B cell (primary cell): ENCODE measurements at regions of chr18 and their contacts with region 1.

Region 1: DNA sequence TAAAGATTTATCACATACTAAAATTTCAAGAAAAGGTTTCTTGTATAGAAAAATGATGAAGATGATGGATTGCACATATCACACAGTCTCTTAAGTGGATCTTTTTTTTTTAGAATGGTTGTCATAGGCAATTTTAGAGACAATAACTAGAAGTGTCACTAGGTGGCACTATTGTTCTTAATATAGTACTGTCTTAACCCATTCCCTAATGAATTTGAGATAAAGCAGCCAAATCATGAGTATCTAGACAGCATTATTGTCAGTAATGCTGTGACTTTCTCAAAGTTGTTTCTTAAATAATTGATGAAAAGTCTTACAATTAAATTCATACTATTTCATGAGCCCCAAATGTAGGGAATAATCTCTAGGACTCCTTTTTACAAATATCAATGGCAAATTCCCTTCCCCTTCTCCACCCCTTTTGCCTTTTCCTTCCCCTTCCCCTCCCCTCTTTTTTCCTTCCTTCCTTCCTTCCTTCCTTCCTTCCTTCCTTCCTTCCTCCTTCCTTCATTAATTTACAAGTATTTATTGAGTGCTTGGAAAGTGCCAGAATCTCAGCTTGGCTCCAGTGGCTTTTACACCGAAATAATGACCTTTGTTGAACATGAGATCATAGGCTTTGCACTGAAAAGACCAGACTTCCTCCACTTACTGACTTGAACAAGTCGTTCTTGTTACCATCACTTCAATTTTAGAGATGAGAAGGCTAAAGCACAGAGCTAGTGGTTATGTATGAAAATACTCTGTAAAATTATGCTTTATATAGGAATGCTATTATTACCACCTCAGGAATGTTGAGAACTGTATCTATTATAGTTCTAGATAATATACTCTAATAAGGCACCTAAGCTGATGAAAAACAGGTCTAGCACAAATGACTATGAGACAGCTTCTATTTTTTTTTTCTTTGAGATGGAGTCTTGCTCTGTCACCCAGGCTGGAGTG is 19.8 kb downstream of the MYL12B start:
- DNase-seq: peak; percentile 85
- ATAC-seq: peak; percentile 48
- H3K4me3 ChIP-seq: no peak overlapping the region
- H3K4me3 Mint-ChIP-seq: no peak overlapping the region
- H3K27ac ChIP-seq: no peak overlapping the region
- H3K27ac Mint-ChIP-seq: no peak overlapping the region
- H3K4me1 ChIP-seq: peaks cover 22 to 27% of the 10 kb centered on the region in 2 donors
- H3K4me1 Mint-ChIP-seq: peaks cover 29% of the 10 kb centered on the region
- H3K27me3 ChIP-seq: no peaks in the 10 kb centered on the region
- H3K27me3 Mint-ChIP-seq: no peaks in the 10 kb centered on the region
- CTCF ChIP-seq: peak; percentile 89

Region 2: GRCh38 chr18:3261371-3262246 is 20.1 kb before region 1 on chr18 and contains the start of gene MYL12B:
- CTCF ChIA-PET with region 1: interaction called, 6 read pairs
- POLR2A ChIA-PET with region 1: interaction called, 6 read pairs
- intact Hi-C with region 1: loop called (anchors 1 kb)
- DNase-seq: peak; percentile 93
- ATAC-seq: peak; percentile 80
- H3K4me3 ChIP-seq: peak within 1 kb of the TSS; percentile 75 to 96 (median 86)
- H3K4me3 Mint-ChIP-seq: peak within 1 kb of the TSS; percentile 88
- H3K27ac ChIP-seq: peak within 1 kb of the TSS; percentile 86 to 97
- H3K27ac Mint-ChIP-seq: peak within 1 kb of the TSS; percentile 100
- H3K4me1 ChIP-seq: peaks cover 70 to 73% of the 10 kb centered on the region in 2 donors
- H3K4me1 Mint-ChIP-seq: peaks cover 77% of the 10 kb centered on the region
- H3K27me3 ChIP-seq: no peaks in the 10 kb centered on the region
- H3K27me3 Mint-ChIP-seq: no peaks in the 10 kb centered on the region
- CTCF ChIP-seq: no peak
- total RNA-seq, gene MYL12B: 124 and 127 TPM in 2 replicates

Region 3: GRCh38 chr18:3321133-3321812 is 39.5 kb after region 1 on chr18:
- CTCF ChIA-PET with region 1: no interaction called
- POLR2A ChIA-PET with region 1: no interaction called
- intact Hi-C with region 1: loop called (anchors 5 kb)
- DNase-seq: no peak
- ATAC-seq: no peak
- H3K4me3 ChIP-seq: no peak overlapping the region
- H3K4me3 Mint-ChIP-seq: no peak overlapping the region
- H3K27ac ChIP-seq: no peak overlapping the region
- H3K27ac Mint-ChIP-seq: no peak overlapping the region
- H3K4me1 ChIP-seq: peaks cover 0 to 6% of the 10 kb centered on the region in 2 donors
- H3K4me1 Mint-ChIP-seq: peaks cover 13% of the 10 kb centered on the region
- H3K27me3 ChIP-seq: no peaks in the 10 kb centered on the region
- H3K27me3 Mint-ChIP-seq: peaks cover 4% of the 10 kb centered on the region
- CTCF ChIP-seq: no peak

Region 4: GRCh38 chr18:3585656-3586509 is 304.2 kb after region 1 on chr18:
- CTCF ChIA-PET with region 1: interaction called, 14 read pairs
- POLR2A ChIA-PET with region 1: no interaction called
- intact Hi-C with region 1: no loop called
- DNase-seq: peak; percentile 80
- ATAC-seq: peak; percentile 49
- H3K4me3 ChIP-seq: peak overlapping the region in 4 of 5 experiments; percentile 9 to 22 (median 18)
- H3K4me3 Mint-ChIP-seq: peak overlapping the region; percentile 69
- H3K27ac ChIP-seq: peak overlapping the region; percentile 81 to 87
- H3K27ac Mint-ChIP-seq: peak overlapping the region; percentile 83
- H3K4me1 ChIP-seq: peaks cover 42 to 43% of the 10 kb centered on the region in 2 donors
- H3K4me1 Mint-ChIP-seq: peaks cover 47% of the 10 kb centered on the region
- H3K27me3 ChIP-seq: no peaks in the 10 kb centered on the region
- H3K27me3 Mint-ChIP-seq: no peaks in the 10 kb centered on the region
- CTCF ChIP-seq: peak; percentile 57

Region 5: DNA sequence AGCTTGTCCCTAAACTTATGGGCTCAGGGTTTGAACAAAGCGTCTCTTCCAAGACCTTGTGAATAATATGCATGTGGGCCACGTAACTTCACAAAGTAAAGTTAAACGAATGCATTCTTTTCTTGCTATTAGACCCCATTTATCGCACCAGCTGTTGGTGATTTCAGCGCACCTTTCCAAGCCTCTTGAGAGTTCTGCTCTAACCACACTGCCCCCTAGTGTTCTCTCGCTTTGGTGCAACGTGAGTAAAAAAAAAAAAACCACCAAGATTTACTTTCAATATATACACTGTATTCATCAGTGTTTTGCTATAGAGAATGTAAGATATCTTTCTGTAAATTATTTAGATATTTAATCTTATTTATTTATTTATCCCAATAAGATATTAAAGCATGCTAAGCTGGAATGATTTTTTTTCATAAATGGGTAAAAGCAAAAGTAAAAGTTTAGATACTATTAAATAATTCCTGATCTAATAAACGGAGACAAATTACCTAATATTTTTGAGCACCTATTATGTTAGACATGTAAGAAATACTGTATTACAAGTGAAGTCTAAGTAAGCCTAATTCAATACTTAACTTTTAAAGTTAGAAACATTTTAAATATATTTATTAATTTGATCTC is 713.9 kb after region 1 on chr18:
- CTCF ChIA-PET with region 1: interaction called, 4 read pairs
- POLR2A ChIA-PET with region 1: no interaction called
- intact Hi-C with region 1: loop called (anchors 2 kb)
- DNase-seq: peak; percentile 55
- ATAC-seq: peak; percentile 53
- H3K4me3 ChIP-seq: no peak overlapping the region
- H3K4me3 Mint-ChIP-seq: no peak overlapping the region
- H3K27ac ChIP-seq: no peak overlapping the region
- H3K27ac Mint-ChIP-seq: no peak overlapping the region
- H3K4me1 ChIP-seq: no peaks in the 10 kb centered on the region
- H3K4me1 Mint-ChIP-seq: no peaks in the 10 kb centered on the region
- H3K27me3 ChIP-seq: no peaks in the 10 kb centered on the region
- H3K27me3 Mint-ChIP-seq: no peaks in the 10 kb centered on the region
- CTCF ChIP-seq: peak; percentile 84